ENCODE measurements at regions of chr14 and their contacts with region 1.

Region 1: GRCh38 chr14:20413045-20413799 is at the start of gene TEP1:
- DNase-seq: peak; percentile 46 to 75 (median 57)
- ATAC-seq: peak; percentile 80
- H3K4me3 ChIP-seq: peak within 1 kb of the TSS; percentile 71
- H3K4me3 Mint-ChIP-seq: peak within 1 kb of the TSS; percentile 94 to 100 (median 97)
- H3K27ac ChIP-seq: peak within 1 kb of the TSS; percentile 86
- H3K27ac Mint-ChIP-seq: peak within 1 kb of the TSS; percentile 90 to 99 (median 93)
- H3K4me1 ChIP-seq: peaks cover 8 to 17% of the 10 kb centered on the region in 2 donors
- H3K4me1 Mint-ChIP-seq: peaks cover 31 to 59% (median 46%) of the 10 kb centered on the region in 7 donors
- H3K27me3 ChIP-seq: no peaks in the 10 kb centered on the region
- H3K27me3 Mint-ChIP-seq: no peaks in the 10 kb centered on the region
- total RNA-seq, gene TEP1: 23.5 to 56.0 (median 43.6) TPM

Region 2: DNA sequence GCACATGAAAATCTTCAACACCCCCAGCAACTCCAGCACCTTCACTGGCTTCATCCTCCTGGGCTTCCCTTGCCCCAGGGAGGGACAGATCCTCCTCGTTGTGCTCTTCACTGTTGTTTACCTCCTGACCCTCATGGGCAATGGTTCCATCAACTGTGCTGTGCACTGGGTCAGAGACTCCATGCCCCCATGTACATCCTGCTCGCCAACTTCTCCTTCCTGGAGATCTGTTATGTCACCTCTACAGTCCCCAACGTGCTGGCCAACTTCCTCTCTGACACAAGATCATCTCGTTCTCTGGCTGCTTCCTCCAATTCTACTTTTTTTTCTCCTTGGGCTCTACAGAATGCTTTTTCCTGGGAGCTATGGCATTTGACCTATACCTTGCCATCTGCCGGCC is 234.0 kb before region 1 on chr14:
- CTCF ChIA-PET with region 1: no interaction called
- POLR2A ChIA-PET with region 1: no interaction called
- intact Hi-C with region 1: no loop called
- DNase-seq: no peak
- ATAC-seq: peak; percentile 58
- H3K4me3 ChIP-seq: no peak overlapping the region
- H3K4me3 Mint-ChIP-seq: no peak overlapping the region
- H3K27ac ChIP-seq: no peak overlapping the region
- H3K27ac Mint-ChIP-seq: no peak overlapping the region
- H3K4me1 ChIP-seq: no peaks in the 10 kb centered on the region
- H3K4me1 Mint-ChIP-seq: no peaks in the 10 kb centered on the region
- H3K27me3 ChIP-seq: no peaks in the 10 kb centered on the region
- H3K27me3 Mint-ChIP-seq: peaks cover 0 to 14% (median 4%) of the 10 kb centered on the region in 5 donors

Region 3: DNA sequence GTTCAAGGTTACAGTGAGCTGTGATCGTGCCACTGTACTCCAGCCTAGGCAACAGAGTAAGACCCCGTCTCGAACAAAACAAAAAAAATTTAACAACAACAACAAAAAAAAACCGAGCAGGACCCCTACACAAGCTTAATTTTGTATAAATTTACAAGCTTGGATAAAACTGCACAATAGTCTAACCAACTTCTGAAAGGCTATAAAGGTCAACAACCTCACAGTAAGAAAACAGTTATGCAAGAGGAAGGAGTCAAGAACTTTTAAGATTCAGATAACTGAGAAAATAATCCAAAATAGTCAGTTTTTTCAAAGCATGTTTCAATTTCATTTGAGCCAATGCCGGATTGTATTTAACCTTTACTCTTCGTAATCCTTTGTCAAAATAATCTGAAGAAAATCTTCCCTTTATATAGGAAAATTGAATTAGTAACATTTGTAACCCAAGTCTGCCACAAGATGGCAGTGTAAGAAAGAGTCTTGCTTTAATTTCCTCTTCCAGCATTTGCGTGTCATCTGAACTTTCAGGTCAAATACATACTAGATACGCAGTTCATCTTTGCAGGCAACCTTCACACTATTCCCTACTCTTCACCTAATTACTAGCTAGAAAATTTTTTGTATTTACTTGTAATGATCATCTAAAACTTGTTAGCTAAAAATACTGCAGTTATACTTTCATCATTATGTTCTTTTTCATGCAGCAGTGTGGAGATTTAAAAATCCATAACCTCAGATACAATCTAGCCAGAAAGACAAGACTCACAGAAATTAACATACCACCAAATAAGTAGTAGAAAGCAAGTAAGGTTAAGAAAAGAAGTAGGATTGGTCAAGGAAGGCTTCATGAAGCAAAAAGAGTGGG is 86.0 kb before region 1 on chr14:
- CTCF ChIA-PET with region 1: interaction called, 17 read pairs
- POLR2A ChIA-PET with region 1: no interaction called
- intact Hi-C with region 1: loop called (anchors 1 to 2 kb)
- DNase-seq: peak in 7 of 9 donors; percentile 44 to 74 (median 66)
- ATAC-seq: peak; percentile 81
- H3K4me3 ChIP-seq: no peak overlapping the region
- H3K4me3 Mint-ChIP-seq: peak overlapping the region in 5 of 10 donors; percentile 2 to 52 (median 26)
- H3K27ac ChIP-seq: no peak overlapping the region
- H3K27ac Mint-ChIP-seq: peak overlapping the region; percentile 35 to 93 (median 66)
- H3K4me1 ChIP-seq: peaks cover 0 to 4% of the 10 kb centered on the region in 2 donors
- H3K4me1 Mint-ChIP-seq: peaks cover 9 to 42% (median 27%) of the 10 kb centered on the region in 7 donors
- H3K27me3 ChIP-seq: no peaks in the 10 kb centered on the region
- H3K27me3 Mint-ChIP-seq: no peaks in the 10 kb centered on the region

Region 4: GRCh38 chr14:20400965-20401593 is 12.1 kb before region 1 on chr14:
- CTCF ChIA-PET with region 1: interaction called, 13 read pairs
- POLR2A ChIA-PET with region 1: interaction called, 6 read pairs
- intact Hi-C with region 1: no loop called
- DNase-seq: peak in 1 of 9 donors; percentile 27
- ATAC-seq: no peak
- H3K4me3 ChIP-seq: no peak overlapping the region
- H3K4me3 Mint-ChIP-seq: peak overlapping the region in 1 of 10 donors; percentile 62
- H3K27ac ChIP-seq: no peak overlapping the region
- H3K27ac Mint-ChIP-seq: peak overlapping the region in 6 of 9 donors; percentile 23 to 84 (median 36)
- H3K4me1 ChIP-seq: no peaks in the 10 kb centered on the region
- H3K4me1 Mint-ChIP-seq: peaks cover 0 to 32% (median 11%) of the 10 kb centered on the region in 7 donors
- H3K27me3 ChIP-seq: no peaks in the 10 kb centered on the region
- H3K27me3 Mint-ChIP-seq: no peaks in the 10 kb centered on the region

Region 5: DNA sequence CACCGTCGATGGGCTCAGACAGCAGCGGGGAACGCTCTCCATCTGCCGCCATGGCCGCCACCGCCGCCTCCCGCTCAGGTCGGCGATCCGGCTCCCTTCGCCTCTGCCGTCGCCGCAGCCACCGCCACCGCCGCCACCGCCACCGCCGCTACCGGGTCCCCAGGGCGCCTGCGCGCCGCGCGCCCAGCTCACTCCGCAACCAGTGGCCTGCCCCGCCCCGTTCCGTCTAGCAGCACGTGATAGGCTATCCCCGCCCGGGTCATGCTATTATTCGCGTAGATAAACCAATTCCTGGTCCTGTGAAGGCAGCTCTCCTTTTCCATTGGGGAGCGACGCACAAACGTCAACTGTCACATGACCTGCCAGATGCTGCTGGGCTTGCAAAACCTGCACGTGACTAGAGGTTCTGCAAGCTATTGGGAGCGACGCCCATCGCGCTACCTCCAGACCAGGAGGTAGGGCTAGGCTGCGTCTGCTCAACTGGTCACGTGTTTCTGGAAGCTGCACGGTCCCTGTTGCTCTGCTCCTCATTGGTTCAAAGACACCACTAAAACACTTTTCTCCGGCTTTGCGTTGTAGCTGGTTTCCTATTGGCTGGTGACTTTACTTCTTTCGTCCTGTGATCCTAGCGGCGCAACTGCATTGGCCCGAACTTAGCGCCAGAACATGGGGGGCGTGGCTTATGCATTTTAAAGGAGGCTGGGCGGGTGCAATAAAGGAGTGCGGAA is 48.2 kb after region 1 on chr14 and contains the start of gene PIP4P1:
- CTCF ChIA-PET with region 1: interaction called, 8 read pairs
- POLR2A ChIA-PET with region 1: interaction called, 24 read pairs
- intact Hi-C with region 1: loop called (anchors 1 kb)
- DNase-seq: peak; percentile 95 to 100 (median 99)
- ATAC-seq: peak; percentile 92
- H3K4me3 ChIP-seq: peak within 1 kb of the TSS; percentile 83
- H3K4me3 Mint-ChIP-seq: peak within 1 kb of the TSS; percentile 81 to 97 (median 92)
- H3K27ac ChIP-seq: peak within 1 kb of the TSS; percentile 96
- H3K27ac Mint-ChIP-seq: peak within 1 kb of the TSS; percentile 88 to 99 (median 92)
- H3K4me1 ChIP-seq: peaks cover 20 to 21% of the 10 kb centered on the region in 2 donors
- H3K4me1 Mint-ChIP-seq: peaks cover 18 to 36% (median 32%) of the 10 kb centered on the region in 7 donors
- H3K27me3 ChIP-seq: no peaks in the 10 kb centered on the region
- H3K27me3 Mint-ChIP-seq: peaks cover 0 to 2% (median 0%) of the 10 kb centered on the region in 5 donors
- total RNA-seq, gene PIP4P1: 34.9 to 87.1 (median 74.2) TPM

Region 6: GRCh38 chr14:20530771-20531571 is 117.7 kb after region 1 on chr14:
- CTCF ChIA-PET with region 1: interaction called, 5 read pairs
- POLR2A ChIA-PET with region 1: no interaction called
- intact Hi-C with region 1: loop called in 1 of 2 experiments (anchors 2 kb)
- DNase-seq: peak; percentile 38 to 63 (median 47)
- ATAC-seq: peak; percentile 86
- H3K4me3 ChIP-seq: no peak overlapping the region
- H3K4me3 Mint-ChIP-seq: peak overlapping the region in 6 of 10 donors; percentile 26 to 66 (median 45)
- H3K27ac ChIP-seq: no peak overlapping the region
- H3K27ac Mint-ChIP-seq: peak overlapping the region in 1 of 9 donors; percentile 53
- H3K4me1 ChIP-seq: no peaks in the 10 kb centered on the region
- H3K4me1 Mint-ChIP-seq: peaks cover 2 to 19% (median 12%) of the 10 kb centered on the region in 7 donors
- H3K27me3 ChIP-seq: no peaks in the 10 kb centered on the region
- H3K27me3 Mint-ChIP-seq: peaks cover 0 to 52% (median 8%) of the 10 kb centered on the region in 5 donors

Region 7: GRCh38 chr14:21612324-21612723 is 1199.1 kb after region 1 on chr14:
- CTCF ChIA-PET with region 1: no interaction called
- POLR2A ChIA-PET with region 1: no interaction called
- intact Hi-C with region 1: no loop called
- DNase-seq: no peak
- ATAC-seq: no peak
- H3K4me3 ChIP-seq: no peak overlapping the region
- H3K4me3 Mint-ChIP-seq: no peak overlapping the region
- H3K27ac ChIP-seq: no peak overlapping the region
- H3K27ac Mint-ChIP-seq: no peak overlapping the region
- H3K4me1 ChIP-seq: no peaks in the 10 kb centered on the region
- H3K4me1 Mint-ChIP-seq: no peaks in the 10 kb centered on the region
- H3K27me3 ChIP-seq: no peaks in the 10 kb centered on the region
- H3K27me3 Mint-ChIP-seq: peaks cover 0 to 31% (median 0%) of the 10 kb centered on the region in 5 donors